PC-9 (cell line): ENCODE measurements at regions of chr14 and their contacts with region 1.

Region 1: DNA sequence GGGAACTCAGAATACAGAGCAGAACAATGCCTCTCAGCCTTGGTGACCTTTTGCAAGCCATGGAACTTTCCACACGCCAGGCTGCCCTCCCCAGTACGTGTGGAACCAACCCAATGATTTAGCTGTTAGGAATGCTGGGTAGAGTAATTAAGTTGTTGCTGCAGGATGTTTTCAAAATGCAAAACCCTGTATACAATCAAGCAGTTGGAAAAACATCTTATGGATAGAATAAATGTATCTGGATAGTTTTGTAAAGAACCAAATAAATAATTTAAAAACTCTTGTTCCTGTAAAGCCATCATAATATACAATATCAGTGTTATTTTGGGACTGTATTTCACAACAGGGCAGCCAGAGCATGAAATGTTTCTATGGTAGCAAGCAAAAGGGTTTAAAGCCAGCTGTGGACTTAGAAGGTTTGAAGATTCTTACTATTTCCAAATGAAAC is 19.4 kb downstream of the PPP1R36 start:
- DNase-seq: peak; percentile 77 to 94
- H3K4me3 ChIP-seq: no peak overlapping the region
- H3K27ac ChIP-seq: peak overlapping the region; percentile 62
- H3K4me1 ChIP-seq: peaks cover 28% of the 10 kb centered on the region
- H3K27me3 ChIP-seq: no peaks in the 10 kb centered on the region
- CTCF ChIP-seq: no peak

Region 2: DNA sequence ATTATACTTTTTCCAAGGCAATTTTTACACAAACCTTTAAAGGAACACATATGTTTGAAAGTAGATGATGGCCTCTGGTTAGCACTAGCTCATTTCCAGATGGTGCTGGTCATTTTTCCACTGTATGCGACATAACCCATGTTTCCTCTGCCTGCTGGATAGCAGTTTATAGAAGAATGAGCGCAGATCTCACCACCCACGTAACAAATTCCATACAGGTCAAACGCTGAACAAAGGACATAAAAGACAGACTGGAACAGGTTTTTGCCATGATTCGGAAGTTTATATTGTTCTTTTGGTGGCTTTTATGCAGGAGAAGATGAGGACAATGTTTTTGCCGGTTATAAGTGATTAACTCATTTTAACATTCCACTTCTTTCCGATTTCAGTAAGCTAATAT is 11.3 kb after region 1 on chr14:
- CTCF ChIA-PET with region 1: no interaction called
- POLR2A ChIA-PET with region 1: interaction called, 25 read pairs
- intact Hi-C with region 1: no loop called
- DNase-seq: no peak
- H3K4me3 ChIP-seq: no peak overlapping the region
- H3K27ac ChIP-seq: no peak overlapping the region
- H3K4me1 ChIP-seq: no peaks in the 10 kb centered on the region
- H3K27me3 ChIP-seq: no peaks in the 10 kb centered on the region
- CTCF ChIP-seq: no peak

Region 3: DNA sequence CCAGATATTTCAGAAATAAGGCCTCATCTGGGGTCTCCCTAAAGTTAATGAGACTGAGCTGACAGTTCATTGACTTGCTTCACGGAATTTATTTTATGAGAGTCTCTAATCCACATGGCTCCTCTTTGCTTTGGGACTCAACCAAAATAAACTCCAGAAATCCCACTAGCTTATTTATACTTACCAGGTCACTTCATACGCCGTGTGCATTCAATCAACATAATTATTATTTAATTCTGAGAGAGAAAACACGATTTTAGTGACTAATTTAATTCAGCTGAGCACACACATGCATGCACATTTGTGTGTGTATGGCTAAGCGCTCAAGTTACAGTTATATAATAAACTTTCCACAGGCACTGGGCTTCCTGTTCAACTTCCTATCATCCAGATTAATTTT is 1583.5 kb after region 1 on chr14:
- CTCF ChIA-PET with region 1: interaction called, 17 read pairs
- POLR2A ChIA-PET with region 1: no interaction called
- intact Hi-C with region 1: no loop called
- DNase-seq: no peak
- H3K4me3 ChIP-seq: no peak overlapping the region
- H3K27ac ChIP-seq: no peak overlapping the region
- H3K4me1 ChIP-seq: no peaks in the 10 kb centered on the region
- H3K27me3 ChIP-seq: 0 out of 2 replicates have a peak, but pooled peaks cover 5% of the 10 kb centered on the region
- CTCF ChIP-seq: no peak